Posterior vena cava (tissue), 2 donors: ENCODE measurements at regions of chr1 and their contacts with region 1.

Region 1: DNA sequence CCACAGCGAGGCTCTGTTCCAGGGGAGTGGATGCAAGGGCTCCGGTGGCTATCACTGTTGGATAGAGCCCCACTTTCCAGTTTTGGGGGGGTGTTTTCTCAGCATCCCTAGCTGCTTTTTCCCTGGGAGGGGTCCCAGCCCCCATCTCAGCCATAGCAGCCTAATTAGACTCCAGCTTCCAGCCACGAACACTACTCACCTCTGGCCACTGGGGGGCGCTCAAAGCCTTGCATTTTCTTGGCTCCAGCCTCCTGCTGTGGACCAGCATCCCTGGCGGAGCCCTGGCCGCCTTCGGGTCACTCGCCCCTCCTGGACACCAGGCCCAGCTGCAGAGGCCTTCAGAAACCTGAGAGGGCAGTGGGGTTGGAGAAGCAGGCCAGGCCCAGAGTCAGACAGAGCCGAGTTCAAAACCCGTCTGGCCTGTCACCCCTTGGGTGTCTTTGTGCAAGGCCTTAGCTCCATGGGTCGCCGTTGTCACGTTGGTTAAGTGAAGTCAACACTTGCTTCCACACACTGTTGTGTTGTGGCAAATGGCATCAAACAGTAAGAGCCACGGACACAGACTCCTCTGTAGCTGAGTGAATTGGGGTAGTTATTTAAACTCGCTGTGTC is 93.5 kb upstream of the ACTL8 start:
- DNase-seq: peak; percentile 91

Region 2: GRCh38 chr1:17635811-17636210 is 25.8 kb before region 1 on chr1:
- intact Hi-C with region 1: no loop called
- DNase-seq: no peak

Region 3: DNA sequence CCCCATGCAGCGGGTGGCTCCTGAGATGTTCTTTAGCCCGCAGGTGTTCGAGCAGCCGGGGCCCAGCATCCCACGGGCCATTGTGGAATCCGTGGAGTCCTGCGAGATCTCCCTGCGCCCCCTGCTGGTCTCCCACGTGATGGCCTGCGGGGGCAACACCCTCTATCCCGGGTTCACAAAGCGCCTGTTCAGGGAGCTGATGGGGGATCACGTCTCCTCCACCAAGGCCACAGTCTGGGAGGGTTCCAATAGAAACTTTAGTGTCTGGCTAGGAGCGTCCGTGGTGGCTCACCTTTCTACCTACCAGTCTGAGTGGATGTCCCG is 164.5 kb after region 1 on chr1:
- intact Hi-C with region 1: loop called in 1 of 2 experiments (anchors 5 kb)
- DNase-seq: peak; percentile 88

Region 4: DNA sequence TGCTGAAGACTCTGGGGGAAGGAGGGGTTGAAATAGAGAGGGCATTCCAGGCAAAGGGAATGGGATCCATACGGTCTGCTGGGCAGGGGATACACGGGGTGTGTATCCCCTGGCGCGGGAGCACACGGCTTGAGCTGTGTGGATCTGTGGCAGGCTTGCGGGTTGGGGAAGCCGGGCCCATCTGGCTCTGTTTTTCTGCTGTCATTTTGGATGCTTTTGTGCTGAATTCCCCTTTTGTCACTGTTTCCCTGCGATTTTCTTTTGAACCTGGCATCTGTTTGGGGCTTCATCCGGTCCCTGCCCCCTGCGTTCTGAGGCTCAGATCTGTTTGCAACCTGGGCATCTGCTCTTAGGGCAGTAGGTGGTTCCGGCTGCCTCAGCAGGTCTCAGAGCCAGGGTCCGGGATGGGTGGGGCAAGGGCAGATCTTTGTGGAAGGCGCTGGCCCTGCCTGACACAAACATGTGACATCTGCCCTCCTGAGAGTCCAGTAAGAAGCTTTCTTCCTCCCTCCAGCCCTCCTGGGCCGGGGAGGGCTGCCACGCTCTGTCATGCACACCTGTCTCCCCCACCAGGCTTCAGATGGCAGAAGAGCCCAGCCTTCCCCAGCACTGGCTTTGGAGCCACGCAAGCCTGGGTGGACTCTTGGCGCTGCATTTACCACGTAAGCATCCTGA is 530.0 kb after region 1 on chr1:
- intact Hi-C with region 1: loop called in 1 of 2 experiments (anchors 5 kb)
- DNase-seq: no peak